ENCODE measurements at regions of chr3 and their contacts with region 1.

Region 1: DNA sequence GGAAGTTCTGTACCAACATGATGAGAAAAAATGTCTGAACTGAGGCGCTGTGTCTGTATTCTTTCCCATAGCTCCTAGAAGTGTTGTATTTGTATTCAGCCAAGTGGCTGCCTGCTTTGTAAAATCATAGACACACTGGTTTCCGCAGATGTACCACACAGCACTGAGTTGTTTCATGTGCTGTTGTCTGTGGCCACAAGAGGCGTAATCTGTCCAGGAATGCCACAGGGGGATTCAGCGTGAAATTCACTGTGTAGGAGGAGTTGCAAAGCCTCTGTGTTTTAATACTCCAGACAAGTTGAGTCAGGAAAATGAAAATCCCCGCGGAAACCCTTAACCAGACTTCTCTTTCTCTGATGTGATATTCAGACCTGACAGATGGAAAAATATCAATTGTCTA is 462.2 kb downstream of the NSUN3 start:
- DNase-seq: peak; percentile 42 to 51
- H3K4me3 ChIP-seq: no peak overlapping the region
- H3K4me3 Mint-ChIP-seq: peak overlapping the region; percentile 54
- H3K27ac Mint-ChIP-seq: peak overlapping the region; percentile 34
- H3K4me1 ChIP-seq: peaks cover 30% of the 10 kb centered on the region
- H3K4me1 Mint-ChIP-seq: peaks cover 29% of the 10 kb centered on the region
- H3K27me3 ChIP-seq: no peaks in the 10 kb centered on the region
- H3K27me3 Mint-ChIP-seq: no peaks in the 10 kb centered on the region
- CTCF ChIP-seq: peak; percentile 51 to 58

Region 2: DNA sequence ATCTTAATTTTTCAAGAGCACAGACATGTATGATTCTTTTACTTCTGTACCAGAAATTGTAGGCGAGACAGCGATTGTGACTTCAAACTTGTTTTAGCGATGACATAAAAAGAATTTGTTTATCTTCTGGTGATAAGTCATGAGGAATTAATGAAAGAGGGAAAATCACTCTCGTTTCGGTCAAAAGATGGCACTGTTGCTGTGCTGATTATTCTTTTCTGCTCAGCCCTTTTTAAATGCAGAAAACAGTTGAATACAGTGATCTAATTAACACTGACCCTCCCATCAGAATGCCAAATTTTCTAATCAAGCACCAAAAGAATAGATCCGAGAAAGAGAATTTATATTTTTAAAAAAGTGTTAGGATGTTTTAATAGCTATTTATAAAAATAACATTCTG is 409.6 kb before region 1 on chr3:
- CTCF ChIA-PET with region 1: no interaction called
- POLR2A ChIA-PET with region 1: no interaction called
- intact Hi-C with region 1: loop called (anchors 5 kb)
- DNase-seq: peak in 1 of 2 experiments; percentile 21
- H3K4me3 ChIP-seq: no peak overlapping the region
- H3K4me3 Mint-ChIP-seq: no peak overlapping the region
- H3K27ac Mint-ChIP-seq: no peak overlapping the region
- H3K4me1 ChIP-seq: no peaks in the 10 kb centered on the region
- H3K4me1 Mint-ChIP-seq: no peaks in the 10 kb centered on the region
- H3K27me3 ChIP-seq: no peaks in the 10 kb centered on the region
- H3K27me3 Mint-ChIP-seq: no peaks in the 10 kb centered on the region
- CTCF ChIP-seq: peak in 1 of 2 experiments; percentile 45

Region 3: DNA sequence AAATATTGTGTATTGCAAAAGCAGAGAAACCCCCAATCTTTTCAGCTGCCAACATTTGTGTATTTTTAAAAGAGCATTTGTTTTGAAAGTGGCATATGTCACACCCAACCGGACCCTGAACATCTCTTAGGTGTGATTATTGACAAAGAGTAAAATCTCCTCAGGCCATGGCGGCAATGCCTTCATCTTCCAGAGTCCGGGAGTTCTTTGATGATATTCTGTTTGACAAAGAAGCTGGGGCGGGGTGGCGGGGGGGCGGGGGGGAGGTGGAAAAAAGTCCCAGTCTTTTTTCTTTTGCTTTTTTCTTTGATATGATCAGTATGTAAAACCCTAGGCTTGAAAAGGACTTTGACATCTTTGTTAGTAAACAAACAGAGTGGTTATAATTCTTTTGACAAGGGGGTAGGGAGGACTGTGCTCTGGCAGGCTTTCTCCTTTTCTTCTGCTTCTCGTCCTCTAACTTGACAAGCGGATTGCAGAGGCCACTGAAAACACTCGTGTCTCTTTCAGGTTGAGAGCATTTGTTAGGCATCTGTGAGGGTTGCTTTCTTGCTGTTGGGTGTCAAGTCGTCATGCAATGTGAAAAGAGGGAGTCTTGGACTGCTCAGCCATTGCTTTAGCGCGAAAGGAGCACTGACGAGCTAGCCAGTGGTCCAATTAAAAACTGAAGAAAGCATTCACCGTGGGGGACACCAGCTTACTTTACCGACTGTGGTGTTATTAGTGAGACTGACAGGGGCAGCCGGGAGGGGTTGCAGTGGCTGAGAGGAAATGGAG is 219.0 kb before region 1 on chr3:
- CTCF ChIA-PET with region 1: no interaction called
- POLR2A ChIA-PET with region 1: no interaction called
- intact Hi-C with region 1: loop called (anchors 1 kb)
- DNase-seq: peak; percentile 54 to 68
- H3K4me3 ChIP-seq: no peak overlapping the region
- H3K4me3 Mint-ChIP-seq: peak overlapping the region; percentile 46
- H3K27ac Mint-ChIP-seq: peak overlapping the region; percentile 28
- H3K4me1 ChIP-seq: peaks cover 29% of the 10 kb centered on the region
- H3K4me1 Mint-ChIP-seq: peaks cover 6% of the 10 kb centered on the region
- H3K27me3 ChIP-seq: no peaks in the 10 kb centered on the region
- H3K27me3 Mint-ChIP-seq: no peaks in the 10 kb centered on the region
- CTCF ChIP-seq: no peak

Region 4: DNA sequence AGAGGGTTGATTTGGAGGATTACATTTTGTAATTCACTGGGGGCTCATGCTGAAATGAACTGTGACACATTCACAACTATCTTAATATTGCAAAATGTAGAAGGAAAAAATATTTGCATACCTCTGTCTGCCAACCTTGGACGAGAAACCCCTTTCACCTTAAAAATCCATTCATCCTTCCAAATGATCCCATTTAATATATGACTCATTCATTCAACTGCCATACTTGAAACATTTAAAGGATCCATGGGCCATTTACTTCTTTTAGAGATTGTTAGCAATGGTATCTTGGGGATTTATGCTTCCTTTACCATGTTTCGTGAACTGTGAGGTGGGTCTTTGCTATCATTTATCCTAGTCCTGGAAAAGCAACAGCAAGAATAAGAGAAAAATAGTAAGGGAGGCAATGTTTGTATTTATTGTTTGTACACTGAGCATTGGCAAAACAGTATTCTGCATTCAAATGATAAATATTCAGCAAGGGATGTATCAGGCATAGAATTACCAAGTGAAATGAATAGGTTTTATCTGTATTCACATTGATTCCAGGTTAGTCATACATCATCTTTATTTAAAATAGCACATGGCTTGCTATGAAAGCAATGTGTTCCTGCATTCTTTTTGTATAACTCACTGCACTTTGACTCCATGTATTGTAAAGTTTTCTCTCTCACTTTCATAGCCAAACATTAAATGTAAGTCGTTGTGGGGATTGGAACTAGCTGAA is 84.1 kb before region 1 on chr3:
- CTCF ChIA-PET with region 1: no interaction called
- POLR2A ChIA-PET with region 1: no interaction called
- intact Hi-C with region 1: loop called (anchors 1 kb)
- DNase-seq: peak in 1 of 2 experiments; percentile 4
- H3K4me3 ChIP-seq: no peak overlapping the region
- H3K4me3 Mint-ChIP-seq: no peak overlapping the region
- H3K27ac Mint-ChIP-seq: peak overlapping the region; percentile 78
- H3K4me1 ChIP-seq: peaks cover 48% of the 10 kb centered on the region
- H3K4me1 Mint-ChIP-seq: peaks cover 19% of the 10 kb centered on the region
- H3K27me3 ChIP-seq: no peaks in the 10 kb centered on the region
- H3K27me3 Mint-ChIP-seq: no peaks in the 10 kb centered on the region
- CTCF ChIP-seq: no peak

Region 5: DNA sequence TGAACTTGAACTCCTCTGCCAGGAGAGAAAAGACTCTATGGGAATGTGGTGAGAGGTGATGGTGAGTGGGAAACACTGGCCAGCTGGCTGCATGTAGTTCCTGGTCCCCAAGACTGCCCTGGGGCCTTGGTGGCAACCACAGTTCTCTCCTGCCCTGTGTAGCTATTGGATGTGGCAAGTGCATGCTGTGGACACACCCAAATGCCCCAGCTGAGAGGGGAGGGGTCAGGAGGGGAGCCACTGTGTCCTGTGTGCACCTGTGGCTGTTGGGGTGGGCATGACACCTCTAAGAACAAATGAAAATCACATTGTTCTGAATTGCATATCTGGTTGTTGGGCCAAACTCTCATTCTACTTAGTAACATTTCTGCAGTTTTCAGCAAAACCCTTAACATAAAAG is 52.5 kb before region 1 on chr3:
- CTCF ChIA-PET with region 1: no interaction called
- POLR2A ChIA-PET with region 1: no interaction called
- intact Hi-C with region 1: no loop called
- DNase-seq: no peak
- H3K4me3 ChIP-seq: no peak overlapping the region
- H3K4me3 Mint-ChIP-seq: no peak overlapping the region
- H3K27ac Mint-ChIP-seq: no peak overlapping the region
- H3K4me1 ChIP-seq: no peaks in the 10 kb centered on the region
- H3K4me1 Mint-ChIP-seq: no peaks in the 10 kb centered on the region
- H3K27me3 ChIP-seq: no peaks in the 10 kb centered on the region
- H3K27me3 Mint-ChIP-seq: no peaks in the 10 kb centered on the region
- CTCF ChIP-seq: no peak

Region 6: DNA sequence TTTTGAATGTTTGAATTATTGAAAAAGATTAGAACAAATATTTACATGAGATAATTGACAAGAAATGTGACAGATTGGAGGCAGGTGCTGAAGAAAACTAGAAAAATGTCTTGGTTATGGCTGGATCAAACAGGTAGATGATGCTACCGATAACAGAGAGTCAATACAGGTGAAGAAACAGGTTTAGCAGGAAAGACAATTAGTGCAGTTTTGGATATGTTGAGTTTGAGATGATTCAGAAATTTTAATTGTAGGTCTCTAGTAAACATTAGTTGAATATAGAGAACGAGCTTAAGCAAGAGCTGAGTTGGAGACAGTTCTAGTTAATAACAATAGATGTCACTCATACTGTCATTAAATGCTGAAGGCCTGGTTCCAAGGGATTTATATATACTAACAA is 62.2 kb after region 1 on chr3:
- CTCF ChIA-PET with region 1: interaction called, 4 read pairs
- POLR2A ChIA-PET with region 1: no interaction called
- intact Hi-C with region 1: loop called (anchors 1 kb)
- DNase-seq: peak; percentile 29 to 67
- H3K4me3 ChIP-seq: no peak overlapping the region
- H3K4me3 Mint-ChIP-seq: peak overlapping the region; percentile 3
- H3K27ac Mint-ChIP-seq: peak overlapping the region; percentile 87
- H3K4me1 ChIP-seq: peaks cover 25% of the 10 kb centered on the region
- H3K4me1 Mint-ChIP-seq: peaks cover 29% of the 10 kb centered on the region
- H3K27me3 ChIP-seq: no peaks in the 10 kb centered on the region
- H3K27me3 Mint-ChIP-seq: no peaks in the 10 kb centered on the region
- CTCF ChIP-seq: no peak

Region 7: DNA sequence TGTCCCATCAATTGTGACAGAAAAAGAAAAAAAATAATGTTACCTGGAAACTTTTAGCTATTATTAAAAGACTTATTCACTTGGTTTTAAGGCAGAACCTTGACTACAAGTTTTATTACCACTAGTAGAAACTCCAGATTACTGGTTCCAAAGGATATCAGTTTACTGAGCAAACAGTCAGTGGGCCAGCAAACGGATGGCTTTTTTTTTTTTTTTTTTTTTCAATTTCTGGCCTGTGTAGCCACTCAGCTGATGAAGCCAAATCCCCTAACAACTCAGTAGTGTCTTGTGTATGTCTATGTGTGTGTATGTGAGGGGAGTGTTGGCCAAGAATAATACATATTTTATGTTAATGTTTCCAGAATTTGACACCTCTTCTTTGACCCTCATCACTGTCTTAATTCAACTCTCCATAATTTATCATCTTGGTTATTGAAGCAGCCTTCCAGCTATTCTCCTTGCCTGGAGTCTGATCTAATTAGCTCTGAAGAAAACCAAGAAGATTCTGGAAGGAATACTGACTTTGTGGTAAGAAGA is 262.8 kb after region 1 on chr3:
- CTCF ChIA-PET with region 1: interaction called, 4 read pairs
- POLR2A ChIA-PET with region 1: no interaction called
- intact Hi-C with region 1: loop called (anchors 10 kb)
- DNase-seq: no peak
- H3K4me3 ChIP-seq: no peak overlapping the region
- H3K4me3 Mint-ChIP-seq: no peak overlapping the region
- H3K27ac Mint-ChIP-seq: no peak overlapping the region
- H3K4me1 ChIP-seq: no peaks in the 10 kb centered on the region; the same call in 1 of the 2 replicates
- H3K4me1 Mint-ChIP-seq: no peaks in the 10 kb centered on the region
- H3K27me3 ChIP-seq: no peaks in the 10 kb centered on the region
- H3K27me3 Mint-ChIP-seq: no peaks in the 10 kb centered on the region
- CTCF ChIP-seq: no peak